GM12878 (cell line): ENCODE measurements at regions of chr5 and their contacts with region 1.

Region 1: GRCh38 chr5:177599731-177600507 is at the start of gene B4GALT7:
- DNase-seq: no peak
- ATAC-seq: peak; percentile 94
- H3K4me3 ChIP-seq: peak within 1 kb of the TSS; percentile 89
- H3K27ac ChIP-seq: peak within 1 kb of the TSS; percentile 81
- H3K4me1 ChIP-seq: peaks cover 3% of the 10 kb centered on the region; the same call in 1 of the 2 replicates
- H3K27me3 ChIP-seq: no peaks in the 10 kb centered on the region
- CTCF ChIP-seq: no peak
- EP300 ChIP-seq: no peak
- POLR2A ChIP-seq: peak; percentile 92
- RAD21 ChIP-seq: peak; percentile 12; the same call in 1 of the 2 replicates
- polyA plus RNA-seq, gene B4GALT7: 0.34 to 2.3 TPM

Region 2: DNA sequence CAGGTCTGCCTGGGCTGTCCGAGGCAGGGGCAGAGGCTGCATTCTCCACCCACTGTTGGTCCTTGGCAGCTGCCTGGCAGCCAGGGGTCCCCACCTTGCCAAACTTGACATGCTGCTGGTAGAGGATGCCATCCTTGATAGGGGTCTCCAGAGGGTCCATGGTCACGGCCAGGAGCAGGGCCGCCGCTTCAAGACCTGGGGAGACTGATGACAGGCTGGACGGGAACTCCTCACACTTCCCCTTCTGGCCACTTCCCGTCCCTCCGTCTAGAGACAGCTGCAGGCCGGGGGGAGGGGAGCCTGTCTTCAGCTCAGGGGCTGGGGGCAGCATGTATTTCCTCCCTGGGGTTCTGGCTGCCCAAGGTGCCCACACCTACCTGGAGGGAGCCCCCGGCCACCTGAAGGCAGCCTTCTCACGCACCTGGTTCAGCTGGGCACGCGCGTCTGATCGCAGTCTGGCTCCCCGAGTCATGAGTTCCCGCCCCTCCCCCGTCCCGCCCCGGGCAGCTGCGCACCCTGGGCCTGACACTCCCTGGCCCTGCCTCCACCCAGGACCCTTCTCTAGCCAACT is 90.5 kb before region 1 on chr5 and contains the start of gene DOK3:
- CTCF ChIA-PET with region 1: no interaction called
- POLR2A ChIA-PET with region 1: interaction called, 3 read pairs
- RAD21 ChIA-PET with region 1: no interaction called
- SMC1A ChIA-PET with region 1: no interaction called
- in situ Hi-C with region 1: no loop called
- intact Hi-C with region 1: loop called (anchors 5 kb)
- DNase-seq: no peak
- ATAC-seq: peak; percentile 63
- H3K4me3 ChIP-seq: peak within 1 kb of the TSS; percentile 87
- H3K27ac ChIP-seq: peak within 1 kb of the TSS; percentile 87
- H3K4me1 ChIP-seq: peaks cover 37% of the 10 kb centered on the region
- H3K27me3 ChIP-seq: no peaks in the 10 kb centered on the region
- CTCF ChIP-seq: no peak
- EP300 ChIP-seq: no peak
- POLR2A ChIP-seq: no peak
- RAD21 ChIP-seq: no peak
- polyA plus RNA-seq, gene DOK3: 6.6 to 8.0 TPM

Region 3: GRCh38 chr5:178069909-178070308 is 470.0 kb after region 1 on chr5:
- CTCF ChIA-PET with region 1: no interaction called
- POLR2A ChIA-PET with region 1: no interaction called
- RAD21 ChIA-PET with region 1: no interaction called
- SMC1A ChIA-PET with region 1: no interaction called
- in situ Hi-C with region 1: loop called (anchors 10 kb)
- intact Hi-C with region 1: no loop called
- DNase-seq: no peak
- ATAC-seq: peak; percentile 87
- H3K4me3 ChIP-seq: no peak overlapping the region
- H3K27ac ChIP-seq: no peak overlapping the region
- H3K4me1 ChIP-seq: peaks cover 5% of the 10 kb centered on the region
- H3K27me3 ChIP-seq: peaks cover 0 to 5% of the 10 kb centered on the region in 2 experiments; a peak in 3 of 4 replicates
- CTCF ChIP-seq: peak; percentile 41 to 60 (median 51)
- EP300 ChIP-seq: no peak
- POLR2A ChIP-seq: no peak
- RAD21 ChIP-seq: peak; percentile 73

Region 4: GRCh38 chr5:178163772-178164735 is 564.1 kb after region 1 on chr5:
- CTCF ChIA-PET with region 1: no interaction called
- POLR2A ChIA-PET with region 1: no interaction called
- RAD21 ChIA-PET with region 1: no interaction called
- SMC1A ChIA-PET with region 1: no interaction called
- in situ Hi-C with region 1: loop called (anchors 10 kb)
- intact Hi-C with region 1: no loop called
- DNase-seq: peak; percentile 34
- ATAC-seq: peak; percentile 98
- H3K4me3 ChIP-seq: no peak overlapping the region
- H3K27ac ChIP-seq: no peak overlapping the region
- H3K4me1 ChIP-seq: no peaks in the 10 kb centered on the region
- H3K27me3 ChIP-seq: no peaks in the 10 kb centered on the region
- CTCF ChIP-seq: peak; percentile 99 to 100 (median 99); a peak in 5 of 6 replicates
- EP300 ChIP-seq: no peak
- POLR2A ChIP-seq: no peak
- RAD21 ChIP-seq: peak; percentile 99